Panc1 (cell line): ENCODE measurements at regions of chr1 and their contacts with region 1.

Region 1: GRCh38 chr1:166479052-166479631 is 312.3 kb upstream of the FAM78B start:
- DNase-seq: peak; percentile 22
- ATAC-seq: 0 out of 2 replicates have a peak, but pooled peaks have one; percentile 62
- H3K4me3 ChIP-seq: no peak overlapping the region
- H3K27ac ChIP-seq: no peak overlapping the region
- H3K4me1 ChIP-seq: no peaks in the 10 kb centered on the region
- H3K27me3 ChIP-seq: no peaks in the 10 kb centered on the region; the same call in 1 of the 2 replicates
- CTCF ChIP-seq: peak; percentile 80; the same call in 1 of the 2 replicates

Region 2: DNA sequence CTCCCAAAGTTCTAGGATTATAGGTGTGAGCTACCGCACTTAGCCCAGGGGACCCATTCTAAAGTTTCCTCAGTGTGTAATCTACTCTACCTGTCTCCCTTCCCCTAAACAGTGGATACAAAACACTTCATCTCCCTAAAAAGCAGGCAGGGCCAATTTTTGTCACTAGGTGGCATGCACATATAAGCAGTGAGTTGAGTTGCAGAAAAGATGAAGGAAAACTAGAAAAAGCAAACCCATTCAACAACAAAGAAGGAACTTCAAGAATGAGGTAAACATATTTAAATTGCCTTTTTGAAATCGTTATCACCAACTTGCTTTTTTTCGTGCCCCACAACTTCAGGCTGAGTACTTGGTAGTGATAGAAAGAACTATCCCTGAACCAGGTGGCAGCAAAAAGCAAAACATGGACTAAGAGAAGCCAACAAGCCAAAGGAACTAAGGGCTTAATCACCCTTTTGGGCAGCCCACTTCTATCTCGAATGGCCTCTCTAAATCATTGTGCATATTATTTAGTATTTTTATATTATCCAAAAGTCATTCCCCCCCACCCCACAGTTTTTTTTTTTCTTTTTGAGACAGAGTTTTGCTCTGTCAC is 761.1 kb before region 1 on chr1:
- CTCF ChIA-PET with region 1: interaction called, 12 read pairs
- POLR2A ChIA-PET with region 1: no interaction called
- in situ Hi-C with region 1: no loop called
- intact Hi-C with region 1: no loop called
- DNase-seq: peak; percentile 58
- ATAC-seq: peak; percentile 91
- H3K4me3 ChIP-seq: no peak overlapping the region
- H3K27ac ChIP-seq: no peak overlapping the region
- H3K4me1 ChIP-seq: no peaks in the 10 kb centered on the region
- H3K27me3 ChIP-seq: no peaks in the 10 kb centered on the region
- CTCF ChIP-seq: peak; percentile 86